Cardiac septum (tissue), 1 donor: ENCODE measurements at regions of chr16 and their contacts with region 1.

Region 1: DNA sequence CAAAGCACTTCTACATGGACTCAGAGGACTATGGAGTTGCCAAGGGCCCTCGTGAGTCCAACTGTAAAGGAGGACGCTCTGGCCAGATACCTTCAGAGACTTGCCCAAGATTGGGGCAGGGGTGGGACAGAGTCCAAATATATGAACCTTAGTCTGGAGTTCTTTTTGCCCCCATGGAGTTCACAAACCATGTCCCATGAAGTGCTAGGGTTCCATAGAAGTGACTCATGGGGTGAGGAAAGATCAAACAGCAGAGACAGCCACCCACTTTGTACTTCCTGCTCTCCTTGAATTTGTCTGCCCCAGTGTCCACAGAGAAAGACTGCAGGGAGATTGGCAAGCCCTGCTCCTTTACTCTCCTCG is 29.0 kb downstream of the SRL start:
- DNase-seq: no peak

Region 2: GRCh38 chr16:4232541-4233386 is 19.8 kb after region 1 on chr16:
- intact Hi-C with region 1: loop called (anchors 1 kb)
- DNase-seq: no peak

Region 3: GRCh38 chr16:4244254-4245076 is 31.6 kb after region 1 on chr16:
- intact Hi-C with region 1: loop called (anchors 5 kb)
- DNase-seq: no peak